A549 (cell line): ENCODE measurements at regions of chr1 and their contacts with region 1.

Region 1: GRCh38 chr1:157090196-157090647 is 9.4 kb downstream of the ETV3L start:
- DNase-seq: peak; percentile 77 to 85
- ATAC-seq: peak; percentile 95 to 98
- H3K4me3 ChIP-seq: no peak overlapping the region
- H3K27ac ChIP-seq: no peak overlapping the region
- H3K4me1 ChIP-seq: no peaks in the 10 kb centered on the region
- CTCF ChIP-seq: peak; percentile 93
- EP300 ChIP-seq: no peak
- POLR2A ChIP-seq: no peak
- RAD21 ChIP-seq: peak; percentile 94 to 95

Region 2: DNA sequence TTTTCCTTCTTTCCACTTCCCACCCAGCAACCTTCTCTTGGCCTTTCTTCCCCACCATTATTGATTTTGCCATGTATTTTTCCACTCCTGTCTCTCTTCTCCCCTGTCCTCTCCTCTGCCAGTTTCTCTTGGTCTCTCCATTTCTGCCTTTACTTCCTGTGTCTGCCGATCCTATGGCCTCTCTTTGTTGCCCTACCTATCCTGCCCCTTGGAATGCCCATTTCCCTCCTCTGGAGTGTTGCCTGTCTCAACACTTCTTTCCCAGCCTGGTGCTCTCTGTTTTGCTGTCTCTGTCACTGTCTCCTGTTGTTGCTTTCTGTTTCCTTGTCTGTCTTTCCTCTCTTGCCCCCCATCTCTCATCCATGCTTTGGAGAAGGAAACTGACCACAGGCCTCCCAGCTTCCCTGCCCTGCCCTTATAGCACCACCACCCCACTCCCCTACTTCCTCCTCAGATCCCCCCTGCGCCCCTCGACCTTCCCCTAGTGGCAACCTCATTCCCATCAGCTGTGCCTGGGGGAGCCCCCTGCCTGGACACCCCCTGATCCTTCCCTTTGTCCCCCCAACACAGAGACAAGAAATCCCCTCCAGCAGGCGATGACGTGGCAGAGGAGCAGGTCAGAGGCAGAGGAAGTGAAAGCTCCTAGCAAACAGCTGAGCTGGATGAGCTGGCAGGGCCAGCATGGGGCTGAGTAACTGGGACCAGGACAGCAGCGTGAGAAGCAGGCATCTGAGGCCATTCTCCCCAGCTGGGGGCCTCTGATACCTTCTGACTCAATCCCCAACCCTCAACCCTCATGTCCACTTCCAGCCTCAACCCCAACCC is 16.0 kb after region 1 on chr1:
- CTCF ChIA-PET with region 1: interaction called, 104 read pairs
- POLR2A ChIA-PET with region 1: no interaction called
- DNase-seq: peak; percentile 40 to 67
- ATAC-seq: peak; percentile 71 to 79
- H3K4me3 ChIP-seq: no peak overlapping the region
- H3K27ac ChIP-seq: peak overlapping the region; percentile 24 to 73; a peak in 4 of 6 replicates
- H3K4me1 ChIP-seq: peaks cover 19% of the 10 kb centered on the region
- CTCF ChIP-seq: no peak
- EP300 ChIP-seq: no peak
- POLR2A ChIP-seq: no peak
- RAD21 ChIP-seq: no peak

Region 3: GRCh38 chr1:157124855-157125254 is 34.6 kb after region 1 on chr1:
- CTCF ChIA-PET with region 1: interaction called, 16 read pairs
- POLR2A ChIA-PET with region 1: no interaction called
- DNase-seq: peak in 1 of 2 experiments; percentile 27
- ATAC-seq: peak; percentile 50 to 71; a peak in 4 of 6 replicates
- H3K4me3 ChIP-seq: no peak overlapping the region
- H3K27ac ChIP-seq: no peak overlapping the region
- H3K4me1 ChIP-seq: no peaks in the 10 kb centered on the region
- CTCF ChIP-seq: no peak
- EP300 ChIP-seq: no peak
- POLR2A ChIP-seq: no peak
- RAD21 ChIP-seq: no peak

Region 4: GRCh38 chr1:157156058-157156541 is 65.9 kb after region 1 on chr1:
- CTCF ChIA-PET with region 1: interaction called, 437 read pairs
- POLR2A ChIA-PET with region 1: interaction called, 6 read pairs
- DNase-seq: peak; percentile 62 to 66
- ATAC-seq: peak; percentile 69 to 89
- H3K4me3 ChIP-seq: peak overlapping the region; percentile 37
- H3K27ac ChIP-seq: peak overlapping the region; percentile 59 to 82; a peak in 4 of 6 replicates
- H3K4me1 ChIP-seq: peaks cover 23% of the 10 kb centered on the region
- CTCF ChIP-seq: peak; percentile 97
- EP300 ChIP-seq: no peak
- POLR2A ChIP-seq: no peak
- RAD21 ChIP-seq: peak; percentile 90 to 92

Region 5: GRCh38 chr1:157170677-157171515 is 80.7 kb after region 1 on chr1:
- CTCF ChIA-PET with region 1: interaction called, 25 read pairs
- POLR2A ChIA-PET with region 1: no interaction called
- DNase-seq: peak; percentile 51 to 63
- ATAC-seq: peak in 1 of 2 experiments; percentile 67; a peak in 4 of 6 replicates
- H3K4me3 ChIP-seq: no peak overlapping the region
- H3K27ac ChIP-seq: no peak overlapping the region
- H3K4me1 ChIP-seq: no peaks in the 10 kb centered on the region
- CTCF ChIP-seq: peak; percentile 55
- EP300 ChIP-seq: no peak
- POLR2A ChIP-seq: no peak
- RAD21 ChIP-seq: peak in 1 of 2 experiments; percentile 17; a peak in 2 of 5 replicates